PC-9 (cell line): ENCODE measurements at regions of chr6 and their contacts with region 1.

Region 1: DNA sequence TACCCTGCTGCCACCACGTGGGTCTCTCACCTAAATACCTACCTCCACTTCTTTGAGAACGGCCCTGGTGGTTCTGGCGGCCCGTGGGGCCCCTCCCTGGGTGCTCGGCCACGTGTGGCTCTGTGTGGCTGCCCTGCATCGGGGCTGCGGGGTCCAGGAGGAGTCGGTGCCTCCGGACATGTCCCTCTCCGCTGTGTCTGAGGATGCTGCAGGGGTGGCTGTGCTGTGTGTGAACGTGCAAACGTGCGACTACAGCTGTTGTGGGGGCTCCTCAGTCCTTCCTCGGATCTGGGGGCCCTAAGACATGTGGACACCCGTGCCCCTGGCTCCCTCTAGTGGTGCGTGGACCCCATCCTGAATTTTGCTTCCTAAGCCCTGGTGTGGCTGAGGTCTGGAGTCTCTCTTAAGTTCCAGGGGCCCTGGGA is 691.8 kb downstream of the QKI start:
- DNase-seq: peak in 1 of 2 experiments; percentile 0
- H3K4me3 ChIP-seq: no peak overlapping the region
- H3K27ac ChIP-seq: no peak overlapping the region
- H3K4me1 ChIP-seq: no peaks in the 10 kb centered on the region
- H3K27me3 ChIP-seq: peaks cover 50% of the 10 kb centered on the region
- CTCF ChIP-seq: peak; percentile 49; the same call in 1 of the 2 replicates

Region 2: GRCh38 chr6:163170294-163170883 is 936.0 kb before region 1 on chr6:
- CTCF ChIA-PET with region 1: no interaction called
- POLR2A ChIA-PET with region 1: no interaction called
- intact Hi-C with region 1: loop called (anchors 10 kb)
- DNase-seq: no peak
- H3K4me3 ChIP-seq: no peak overlapping the region; the same call in 1 of the 2 replicates
- H3K27ac ChIP-seq: no peak overlapping the region
- H3K4me1 ChIP-seq: no peaks in the 10 kb centered on the region
- H3K27me3 ChIP-seq: peaks cover 15% of the 10 kb centered on the region; the same call in 1 of the 2 replicates
- CTCF ChIP-seq: peak; percentile 87

Region 3: GRCh38 chr6:164296411-164296810 is 190.1 kb after region 1 on chr6:
- CTCF ChIA-PET with region 1: no interaction called
- POLR2A ChIA-PET with region 1: no interaction called
- intact Hi-C with region 1: no loop called
- DNase-seq: no peak
- H3K4me3 ChIP-seq: no peak overlapping the region
- H3K27ac ChIP-seq: no peak overlapping the region
- H3K4me1 ChIP-seq: no peaks in the 10 kb centered on the region
- H3K27me3 ChIP-seq: 0 out of 2 replicates have a peak, but pooled peaks cover 3% of the 10 kb centered on the region
- CTCF ChIP-seq: no peak